ENCODE measurements at regions of chr6 and their contacts with region 1.

Region 1: GRCh38 chr6:109269953-109270517 is 112.2 kb downstream of the CD164 start:
- DNase-seq: no peak
- ATAC-seq: no peak
- H3K4me3 ChIP-seq: no peak overlapping the region
- H3K27ac ChIP-seq: no peak overlapping the region
- H3K4me1 ChIP-seq: no peaks in the 10 kb centered on the region
- H3K27me3 ChIP-seq: no peaks in the 10 kb centered on the region
- CTCF ChIP-seq: no peak

Region 2: GRCh38 chr6:109255946-109256640 is 13.9 kb before region 1 on chr6:
- intact Hi-C with region 1: loop called in 1 of 10 experiments (anchors 2 kb)
- DNase-seq: no peak
- ATAC-seq: no peak
- H3K4me3 ChIP-seq: no peak overlapping the region
- H3K27ac ChIP-seq: no peak overlapping the region
- H3K4me1 ChIP-seq: peaks cover 0 to 12% (median 0%) of the 10 kb centered on the region in 9 donors
- H3K27me3 ChIP-seq: no peaks in the 10 kb centered on the region
- CTCF ChIP-seq: no peak

Measured in heart right ventricle (tissue), 16 donors.